CD4-positive, alpha-beta memory T cell (primary cell): ENCODE measurements at regions of chr1 and their contacts with region 1.

Region 1: GRCh38 chr1:40951943-40952743 is 27.4 kb upstream of the CTPS1 start:
- DNase-seq: peak; percentile 43 to 52 (median 47)
- H3K4me3 ChIP-seq: no peak overlapping the region
- H3K4me3 Mint-ChIP-seq: peak overlapping the region in 1 of 8 donors; percentile 39
- H3K27ac ChIP-seq: no peak overlapping the region
- H3K27ac Mint-ChIP-seq: no peak overlapping the region
- H3K4me1 ChIP-seq: no peaks in the 10 kb centered on the region
- H3K4me1 Mint-ChIP-seq: peaks cover 0 to 11% (median 4%) of the 10 kb centered on the region in 4 donors
- H3K27me3 ChIP-seq: peaks cover 5% of the 10 kb centered on the region
- H3K27me3 Mint-ChIP-seq: peaks cover 5 to 18% of the 10 kb centered on the region in 2 donors

Region 2: DNA sequence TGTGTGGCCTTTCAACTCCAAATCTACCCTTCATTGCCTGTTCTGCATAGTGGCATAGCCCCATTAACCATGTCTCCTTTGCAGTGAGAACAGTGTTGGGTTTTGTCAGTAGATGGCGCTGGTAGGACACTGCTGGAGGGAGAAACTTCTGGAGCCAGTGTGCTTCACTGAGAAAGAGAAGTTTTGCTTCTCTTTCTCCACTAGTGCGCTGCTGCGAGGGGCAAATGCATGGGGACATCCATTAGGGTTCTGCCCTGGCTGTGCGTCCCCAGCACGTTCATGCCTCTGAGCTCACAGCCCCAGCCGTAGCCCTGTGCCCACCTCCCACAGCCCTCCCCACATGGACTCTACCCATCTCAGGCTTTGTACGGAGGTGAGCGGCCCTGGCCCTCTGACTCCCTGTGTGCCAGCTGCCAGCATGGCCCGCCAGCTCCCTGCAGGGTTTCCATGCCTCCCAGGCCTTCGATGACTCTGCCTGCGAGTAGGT is 339.8 kb before region 1 on chr1:
- CTCF ChIA-PET with region 1: interaction called, 11 read pairs
- POLR2A ChIA-PET with region 1: no interaction called
- intact Hi-C with region 1: no loop called
- DNase-seq: peak; percentile 62 to 69 (median 65)
- H3K4me3 ChIP-seq: no peak overlapping the region
- H3K4me3 Mint-ChIP-seq: no peak overlapping the region
- H3K27ac ChIP-seq: no peak overlapping the region
- H3K27ac Mint-ChIP-seq: no peak overlapping the region
- H3K4me1 ChIP-seq: no peaks in the 10 kb centered on the region
- H3K4me1 Mint-ChIP-seq: no peaks in the 10 kb centered on the region
- H3K27me3 ChIP-seq: no peaks in the 10 kb centered on the region
- H3K27me3 Mint-ChIP-seq: peaks cover 2% of the 10 kb centered on the region in 2 donors

Region 3: GRCh38 chr1:40849801-40850592 is 102.1 kb before region 1 on chr1:
- CTCF ChIA-PET with region 1: interaction called, 19 read pairs
- POLR2A ChIA-PET with region 1: no interaction called
- intact Hi-C with region 1: loop called (anchors 1 kb)
- DNase-seq: peak; percentile 67 to 78 (median 73)
- H3K4me3 ChIP-seq: no peak overlapping the region
- H3K4me3 Mint-ChIP-seq: peak overlapping the region in 7 of 8 donors; percentile 17 to 56 (median 45)
- H3K27ac ChIP-seq: no peak overlapping the region
- H3K27ac Mint-ChIP-seq: peak overlapping the region in 5 of 7 donors; percentile 19 to 71 (median 35)
- H3K4me1 ChIP-seq: peaks cover 9% of the 10 kb centered on the region
- H3K4me1 Mint-ChIP-seq: peaks cover 5 to 14% (median 11%) of the 10 kb centered on the region in 4 donors
- H3K27me3 ChIP-seq: no peaks in the 10 kb centered on the region
- H3K27me3 Mint-ChIP-seq: no peaks in the 10 kb centered on the region

Region 4: GRCh38 chr1:40939320-40940059 is 12.7 kb before region 1 on chr1:
- CTCF ChIA-PET with region 1: interaction called, 50 read pairs
- POLR2A ChIA-PET with region 1: interaction called, 4 read pairs
- intact Hi-C with region 1: no loop called
- DNase-seq: no peak
- H3K4me3 ChIP-seq: no peak overlapping the region
- H3K4me3 Mint-ChIP-seq: no peak overlapping the region
- H3K27ac ChIP-seq: no peak overlapping the region
- H3K27ac Mint-ChIP-seq: no peak overlapping the region
- H3K4me1 ChIP-seq: no peaks in the 10 kb centered on the region
- H3K4me1 Mint-ChIP-seq: no peaks in the 10 kb centered on the region
- H3K27me3 ChIP-seq: no peaks in the 10 kb centered on the region
- H3K27me3 Mint-ChIP-seq: peaks cover 0 to 5% of the 10 kb centered on the region in 2 donors

Region 5: GRCh38 chr1:41003640-41004220 is 51.6 kb after region 1 on chr1:
- CTCF ChIA-PET with region 1: interaction called, 27 read pairs
- POLR2A ChIA-PET with region 1: interaction called, 5 read pairs
- intact Hi-C with region 1: no loop called
- DNase-seq: peak; percentile 82 to 93 (median 87)
- H3K4me3 ChIP-seq: no peak overlapping the region
- H3K4me3 Mint-ChIP-seq: peak overlapping the region in 4 of 8 donors; percentile 1 to 48 (median 18)
- H3K27ac ChIP-seq: no peak overlapping the region
- H3K27ac Mint-ChIP-seq: peak overlapping the region; percentile 11 to 86 (median 77)
- H3K4me1 ChIP-seq: peaks cover 17% of the 10 kb centered on the region
- H3K4me1 Mint-ChIP-seq: peaks cover 11 to 28% (median 20%) of the 10 kb centered on the region in 4 donors
- H3K27me3 ChIP-seq: no peaks in the 10 kb centered on the region
- H3K27me3 Mint-ChIP-seq: no peaks in the 10 kb centered on the region